ENCODE measurements at regions of chr13 and their contacts with region 1.

Region 1: GRCh38 chr13:44917589-44918325 is 71.5 kb downstream of the NUFIP1 start:
- DNase-seq: peak; percentile 96 to 97 (median 97)
- H3K4me3 ChIP-seq: peak overlapping the region; percentile 76 to 85
- H3K4me3 Mint-ChIP-seq: no peak overlapping the region
- H3K27ac ChIP-seq: peak overlapping the region; percentile 72
- H3K27ac Mint-ChIP-seq: no peak overlapping the region
- H3K4me1 ChIP-seq: peaks cover 10% of the 10 kb centered on the region
- H3K4me1 Mint-ChIP-seq: peaks cover 0 to 7% (median 3%) of the 10 kb centered on the region in 4 donors
- H3K27me3 ChIP-seq: no peaks in the 10 kb centered on the region
- H3K27me3 Mint-ChIP-seq: no peaks in the 10 kb centered on the region

Region 2: DNA sequence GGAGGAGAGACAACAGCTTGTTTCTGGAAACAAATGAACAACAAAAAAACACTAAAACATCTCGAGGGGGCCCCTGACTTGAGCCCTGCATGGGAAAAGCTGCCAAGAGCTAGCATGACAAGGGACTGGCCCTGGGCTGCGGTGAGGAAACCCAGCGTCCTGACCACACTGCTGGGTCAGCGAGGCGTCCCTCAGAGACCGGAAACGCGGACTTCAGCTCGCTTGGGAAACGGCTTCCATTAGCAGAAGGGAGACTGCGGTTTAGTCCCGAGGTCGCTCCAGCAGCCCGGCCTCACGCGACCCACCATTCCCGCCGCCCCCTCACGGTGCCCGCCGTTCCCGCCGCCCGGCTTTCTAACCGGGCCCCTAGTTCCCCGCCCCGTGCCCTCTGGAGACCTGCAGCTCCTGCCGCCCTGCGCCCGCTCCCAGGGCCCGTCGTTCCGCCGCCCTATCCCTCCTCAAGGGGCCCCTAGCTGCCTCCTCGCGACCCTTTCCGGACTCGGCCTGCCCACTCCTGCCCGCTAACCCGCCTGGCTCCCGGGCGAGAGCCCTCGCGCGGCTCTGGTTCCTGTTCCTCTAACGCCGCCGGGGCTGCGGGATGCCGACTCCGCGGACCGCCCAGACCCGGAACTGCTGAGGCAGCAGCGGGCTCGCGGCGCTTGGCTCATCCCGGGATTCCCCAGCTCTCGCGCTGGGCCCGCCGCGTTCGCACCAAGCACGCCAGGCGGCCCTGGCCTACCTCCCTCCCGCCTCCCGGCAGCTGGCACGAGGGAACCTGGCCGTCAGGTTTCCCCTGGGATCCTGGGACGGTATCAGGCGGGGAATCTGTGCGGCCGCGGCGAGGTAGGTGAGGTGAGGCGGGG is 1038.6 kb before region 1 on chr13 and contains the start of gene CCDC122:
- CTCF ChIA-PET with region 1: no interaction called
- POLR2A ChIA-PET with region 1: interaction called, 7 read pairs
- intact Hi-C with region 1: loop called (anchors 5 kb)
- DNase-seq: peak; percentile 72 to 85 (median 80)
- H3K4me3 ChIP-seq: peak within 1 kb of the TSS; percentile 20 to 61
- H3K4me3 Mint-ChIP-seq: peak within 1 kb of the TSS; percentile 89 to 98 (median 93)
- H3K27ac ChIP-seq: peak within 1 kb of the TSS; percentile 72
- H3K27ac Mint-ChIP-seq: peak within 1 kb of the TSS; percentile 86 to 97 (median 93)
- H3K4me1 ChIP-seq: peaks cover 12% of the 10 kb centered on the region
- H3K4me1 Mint-ChIP-seq: peaks cover 19 to 32% (median 26%) of the 10 kb centered on the region in 4 donors
- H3K27me3 ChIP-seq: no peaks in the 10 kb centered on the region
- H3K27me3 Mint-ChIP-seq: peaks cover 0 to 1% of the 10 kb centered on the region in 2 donors
- total RNA-seq, gene CCDC122: 4.0 to 4.7 TPM

Region 3: DNA sequence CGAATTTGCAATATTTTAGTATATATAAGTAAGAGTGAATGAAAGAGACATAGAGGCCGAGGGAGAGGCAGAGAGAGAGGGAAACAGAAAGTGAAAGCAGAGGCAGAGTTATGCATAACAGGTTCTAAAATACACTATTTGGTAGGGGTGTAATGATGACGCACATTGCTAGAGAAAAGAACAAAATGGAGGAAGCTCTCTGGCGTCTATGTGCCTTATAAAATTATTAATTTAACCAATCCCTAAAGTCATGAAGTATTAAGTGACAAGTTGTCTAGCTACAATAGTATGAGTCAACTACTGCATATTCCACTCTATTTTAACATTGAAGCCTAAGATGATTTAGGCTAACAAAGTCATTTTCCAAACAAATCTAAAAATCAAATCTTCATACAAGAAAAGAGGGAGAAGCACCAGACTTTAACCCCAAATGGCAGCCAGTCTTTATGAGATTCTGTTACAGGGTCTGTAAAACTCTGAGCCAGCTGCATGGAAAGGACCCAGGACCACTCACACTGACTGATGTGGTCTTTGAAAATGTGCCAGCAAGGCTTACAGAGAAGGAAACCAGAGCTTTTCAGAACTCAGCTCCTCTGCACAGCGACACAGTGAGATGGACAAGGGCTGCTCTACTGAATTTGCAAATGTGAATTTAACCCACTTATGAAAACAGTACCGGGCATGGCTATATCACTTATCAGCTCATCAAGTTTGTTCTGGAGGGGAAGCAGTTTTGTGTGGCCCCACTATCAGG is 643.1 kb before region 1 on chr13:
- CTCF ChIA-PET with region 1: no interaction called
- POLR2A ChIA-PET with region 1: no interaction called
- intact Hi-C with region 1: loop called (anchors 10 kb)
- DNase-seq: peak; percentile 73 to 83 (median 78)
- H3K4me3 ChIP-seq: peak overlapping the region; percentile 48
- H3K4me3 Mint-ChIP-seq: peak overlapping the region; percentile 61 to 89 (median 77)
- H3K27ac ChIP-seq: peak overlapping the region; percentile 45
- H3K27ac Mint-ChIP-seq: peak overlapping the region; percentile 80 to 98 (median 94)
- H3K4me1 ChIP-seq: peaks cover 24% of the 10 kb centered on the region
- H3K4me1 Mint-ChIP-seq: peaks cover 24 to 40% (median 27%) of the 10 kb centered on the region in 4 donors
- H3K27me3 ChIP-seq: no peaks in the 10 kb centered on the region
- H3K27me3 Mint-ChIP-seq: peaks cover 5 to 6% of the 10 kb centered on the region in 2 donors

Region 4: GRCh38 chr13:44484562-44485138 is 433.1 kb before region 1 on chr13:
- CTCF ChIA-PET with region 1: interaction called, 7 read pairs
- POLR2A ChIA-PET with region 1: interaction called, 3 read pairs
- intact Hi-C with region 1: loop called (anchors 1 kb)
- DNase-seq: no peak
- H3K4me3 ChIP-seq: no peak overlapping the region
- H3K4me3 Mint-ChIP-seq: peak overlapping the region; percentile 9 to 84 (median 64)
- H3K27ac ChIP-seq: no peak overlapping the region
- H3K27ac Mint-ChIP-seq: peak overlapping the region in 3 of 7 donors; percentile 7 to 73 (median 70)
- H3K4me1 ChIP-seq: peaks cover 17% of the 10 kb centered on the region
- H3K4me1 Mint-ChIP-seq: peaks cover 11 to 22% (median 12%) of the 10 kb centered on the region in 4 donors
- H3K27me3 ChIP-seq: no peaks in the 10 kb centered on the region
- H3K27me3 Mint-ChIP-seq: no peaks in the 10 kb centered on the region

Region 5: DNA sequence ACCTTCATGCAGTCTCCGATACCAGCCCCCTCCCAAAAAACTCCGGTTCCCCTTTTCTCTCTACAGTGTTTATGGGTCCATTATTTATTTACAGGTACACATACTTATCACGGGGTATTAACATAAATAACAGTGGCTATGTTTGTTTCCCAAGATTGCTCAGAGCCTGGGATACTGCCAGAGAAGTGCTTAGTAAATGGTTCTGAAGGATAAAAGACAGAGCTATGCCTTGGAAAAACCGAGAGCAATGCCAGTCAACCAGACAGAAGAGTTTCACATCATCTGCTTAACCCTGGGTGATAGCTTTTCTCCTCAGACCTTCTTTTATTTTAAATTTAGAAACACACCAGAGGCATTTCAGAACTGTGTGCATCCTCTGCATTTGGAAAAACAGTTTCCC is 10.2 kb after region 1 on chr13:
- CTCF ChIA-PET with region 1: interaction called, 10 read pairs
- POLR2A ChIA-PET with region 1: interaction called, 8 read pairs
- intact Hi-C with region 1: no loop called
- DNase-seq: no peak
- H3K4me3 ChIP-seq: no peak overlapping the region
- H3K4me3 Mint-ChIP-seq: no peak overlapping the region
- H3K27ac ChIP-seq: no peak overlapping the region
- H3K27ac Mint-ChIP-seq: no peak overlapping the region
- H3K4me1 ChIP-seq: no peaks in the 10 kb centered on the region
- H3K4me1 Mint-ChIP-seq: no peaks in the 10 kb centered on the region
- H3K27me3 ChIP-seq: no peaks in the 10 kb centered on the region
- H3K27me3 Mint-ChIP-seq: peaks cover 10 to 13% of the 10 kb centered on the region in 2 donors

Region 6: DNA sequence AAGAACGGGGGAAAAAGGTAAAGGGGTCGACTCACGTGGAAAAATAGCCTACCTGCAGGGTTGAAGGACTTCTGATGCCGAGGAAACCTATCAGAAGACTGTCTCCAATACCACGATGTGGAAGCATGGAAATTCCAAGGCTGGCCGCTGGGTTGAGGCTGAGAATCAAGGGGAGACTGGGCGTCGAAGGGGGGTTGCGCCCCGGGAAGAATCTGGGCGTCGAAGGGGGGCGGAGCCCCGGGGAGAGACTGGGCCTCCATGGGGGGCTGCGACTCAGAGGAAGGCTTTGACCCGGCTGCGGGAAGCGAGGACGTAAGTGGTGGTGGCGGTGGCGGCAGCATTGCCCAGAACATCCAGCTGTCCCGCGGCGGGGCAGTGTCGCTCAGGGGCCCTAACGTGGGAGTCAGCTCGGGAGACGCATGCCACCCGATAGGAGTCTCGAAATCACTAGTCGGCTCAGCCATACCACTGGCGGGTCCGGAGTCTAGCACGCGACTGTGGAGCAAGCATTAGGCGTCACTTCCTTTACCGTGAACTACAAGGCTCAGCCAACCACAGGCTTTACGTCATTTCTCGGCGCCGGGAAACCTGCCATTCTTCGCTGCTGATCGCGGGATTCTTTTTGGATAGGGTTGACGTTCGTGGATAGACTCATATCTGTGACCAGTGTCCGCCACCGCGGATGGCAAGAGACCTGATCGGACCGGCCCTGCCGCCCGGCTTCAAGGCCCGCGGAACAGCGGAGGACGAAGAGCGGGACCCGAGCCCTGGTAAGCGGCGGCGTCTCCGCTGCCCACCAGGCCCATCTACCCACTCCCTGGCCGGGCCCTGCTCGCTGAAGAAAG is 71.4 kb after region 1 on chr13 and contains the starts of genes GPALPP1 and NUFIP1:
- CTCF ChIA-PET with region 1: interaction called, 6 read pairs
- POLR2A ChIA-PET with region 1: interaction called, 8 read pairs
- intact Hi-C with region 1: loop called (anchors 1 kb)
- DNase-seq: peak; percentile 89 to 96 (median 89)
- H3K4me3 ChIP-seq: peak within 1 kb of the TSS; percentile 95 to 99
- H3K4me3 Mint-ChIP-seq: peak within 1 kb of the TSS; percentile 98 to 100 (median 99)
- H3K27ac ChIP-seq: peak within 1 kb of the TSS; percentile 87
- H3K27ac Mint-ChIP-seq: peak within 1 kb of the TSS; percentile 98 to 99 (median 99)
- H3K4me1 ChIP-seq: peaks cover 37% of the 10 kb centered on the region
- H3K4me1 Mint-ChIP-seq: peaks cover 47 to 72% (median 58%) of the 10 kb centered on the region in 4 donors
- H3K27me3 ChIP-seq: no peaks in the 10 kb centered on the region
- H3K27me3 Mint-ChIP-seq: no peaks in the 10 kb centered on the region
- total RNA-seq, gene GPALPP1: 33.0 to 35.1 TPM
- total RNA-seq, gene NUFIP1: 4.4 to 4.8 TPM

Region 7: GRCh38 chr13:45340926-45341750 is 423.4 kb after region 1 on chr13 and contains the start of gene TPT1:
- CTCF ChIA-PET with region 1: interaction called, 3 read pairs
- POLR2A ChIA-PET with region 1: interaction called, 3 read pairs
- intact Hi-C with region 1: loop called (anchors 1 kb)
- DNase-seq: peak; percentile 99 to 100 (median 99)
- H3K4me3 ChIP-seq: peak within 1 kb of the TSS; percentile 90 to 94
- H3K4me3 Mint-ChIP-seq: peak within 1 kb of the TSS; percentile 92 to 100 (median 98)
- H3K27ac ChIP-seq: peak within 1 kb of the TSS; percentile 100
- H3K27ac Mint-ChIP-seq: peak within 1 kb of the TSS; percentile 80 to 100 (median 100)
- H3K4me1 ChIP-seq: peaks cover 55% of the 10 kb centered on the region
- H3K4me1 Mint-ChIP-seq: peaks cover 37 to 68% (median 50%) of the 10 kb centered on the region in 4 donors
- H3K27me3 ChIP-seq: no peaks in the 10 kb centered on the region
- H3K27me3 Mint-ChIP-seq: peaks cover 0 to 3% of the 10 kb centered on the region in 2 donors
- total RNA-seq, gene TPT1: 10,578 to 11,080 TPM